ENCODE measurements at regions of chr14 and their contacts with region 1.

Region 1: GRCh38 chr14:31084385-31084784 is 58.2 kb upstream of the STRN3 start:
- DNase-seq: no peak
- ATAC-seq: peak; percentile 95
- H3K4me3 ChIP-seq: no peak overlapping the region
- H3K27ac ChIP-seq: no peak overlapping the region
- H3K4me1 ChIP-seq: no peaks in the 10 kb centered on the region
- H3K27me3 ChIP-seq: no peaks in the 10 kb centered on the region
- CTCF ChIP-seq: peak in 2 of 3 experiments; percentile 12 to 15; a peak in 1 of 6 replicates
- EP300 ChIP-seq: no peak
- POLR2A ChIP-seq: no peak
- RAD21 ChIP-seq: peak; percentile 38; the same call in 1 of the 2 replicates

Region 2: DNA sequence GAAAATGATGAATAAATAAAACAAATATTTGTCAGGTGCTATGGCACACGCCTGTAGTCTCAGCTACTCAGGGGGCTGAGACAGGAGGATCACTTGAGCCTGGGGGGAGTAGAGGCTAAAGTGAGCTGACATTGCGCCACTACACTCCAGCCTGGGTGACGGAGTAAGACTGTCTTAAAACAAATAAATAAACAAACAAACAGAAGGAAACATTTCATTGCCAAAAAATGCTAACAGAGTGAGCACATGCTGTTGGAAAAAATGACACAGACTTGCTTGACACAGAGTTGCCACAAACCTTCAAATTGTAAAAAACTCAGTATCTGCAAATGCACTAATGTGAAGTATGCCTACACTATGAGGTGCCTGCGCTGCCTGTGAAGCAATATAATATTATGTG is 109.8 kb before region 1 on chr14:
- CTCF ChIA-PET with region 1: interaction called, 97 read pairs
- POLR2A ChIA-PET with region 1: no interaction called
- RAD21 ChIA-PET with region 1: interaction called, 41 read pairs
- SMC1A ChIA-PET with region 1: interaction called, 34 read pairs
- in situ Hi-C with region 1: no loop called
- intact Hi-C with region 1: no loop called
- DNase-seq: no peak
- ATAC-seq: no peak
- H3K4me3 ChIP-seq: no peak overlapping the region
- H3K27ac ChIP-seq: no peak overlapping the region
- H3K4me1 ChIP-seq: no peaks in the 10 kb centered on the region
- H3K27me3 ChIP-seq: no peaks in the 10 kb centered on the region
- CTCF ChIP-seq: no peak
- EP300 ChIP-seq: no peak
- POLR2A ChIP-seq: no peak
- RAD21 ChIP-seq: no peak

Region 3: GRCh38 chr14:30994681-30995620 is 89.4 kb before region 1 on chr14:
- CTCF ChIA-PET with region 1: interaction called, 11 read pairs
- POLR2A ChIA-PET with region 1: interaction called, 4 read pairs
- RAD21 ChIA-PET with region 1: interaction called, 3 read pairs
- SMC1A ChIA-PET with region 1: interaction called, 3 read pairs
- in situ Hi-C with region 1: no loop called
- intact Hi-C with region 1: no loop called
- DNase-seq: peak; percentile 8
- ATAC-seq: peak; percentile 87
- H3K4me3 ChIP-seq: no peak overlapping the region
- H3K27ac ChIP-seq: peak overlapping the region; percentile 7; the same call in 1 of the 2 replicates
- H3K4me1 ChIP-seq: peaks cover 9% of the 10 kb centered on the region; the same call in 1 of the 2 replicates
- H3K27me3 ChIP-seq: no peaks in the 10 kb centered on the region
- CTCF ChIP-seq: no peak
- EP300 ChIP-seq: peak; percentile 9 to 30; a peak in 2 of 4 replicates
- POLR2A ChIP-seq: no peak
- RAD21 ChIP-seq: no peak

Region 4: GRCh38 chr14:31476131-31476866 is 391.9 kb after region 1 on chr14:
- CTCF ChIA-PET with region 1: no interaction called
- POLR2A ChIA-PET with region 1: no interaction called
- RAD21 ChIA-PET with region 1: no interaction called
- SMC1A ChIA-PET with region 1: no interaction called
- in situ Hi-C with region 1: no loop called
- intact Hi-C with region 1: no loop called
- DNase-seq: no peak
- ATAC-seq: no peak
- H3K4me3 ChIP-seq: no peak overlapping the region
- H3K27ac ChIP-seq: no peak overlapping the region
- H3K4me1 ChIP-seq: no peaks in the 10 kb centered on the region
- H3K27me3 ChIP-seq: no peaks in the 10 kb centered on the region
- CTCF ChIP-seq: no peak
- EP300 ChIP-seq: no peak
- POLR2A ChIP-seq: no peak
- RAD21 ChIP-seq: no peak

Measured in GM12878 (cell line).